ENCODE measurements at regions of chr1 and their contacts with region 1.

Region 1: GRCh38 chr1:85276215-85276977 is at the start of gene BCL10:
- DNase-seq: peak; percentile 98
- H3K4me3 Mint-ChIP-seq: peak within 1 kb of the TSS; percentile 83
- H3K27ac Mint-ChIP-seq: peak within 1 kb of the TSS; percentile 87
- H3K4me1 Mint-ChIP-seq: peaks cover 47% of the 10 kb centered on the region
- H3K27me3 Mint-ChIP-seq: peaks cover 12% of the 10 kb centered on the region
- total RNA-seq, gene BCL10: 24.4 and 27.4 TPM in 2 replicates

Region 2: GRCh38 chr1:84690397-84691121 is 585.8 kb before region 1 on chr1 and contains the start of gene SSX2IP:
- intact Hi-C with region 1: loop called (anchors 10 kb)
- DNase-seq: peak; percentile 98
- H3K4me3 Mint-ChIP-seq: peak within 1 kb of the TSS; percentile 94
- H3K27ac Mint-ChIP-seq: peak within 1 kb of the TSS; percentile 94
- H3K4me1 Mint-ChIP-seq: peaks cover 46% of the 10 kb centered on the region
- H3K27me3 Mint-ChIP-seq: no peaks in the 10 kb centered on the region
- total RNA-seq, gene SSX2IP: 12.1 and 13.0 TPM in 2 replicates

Region 3: DNA sequence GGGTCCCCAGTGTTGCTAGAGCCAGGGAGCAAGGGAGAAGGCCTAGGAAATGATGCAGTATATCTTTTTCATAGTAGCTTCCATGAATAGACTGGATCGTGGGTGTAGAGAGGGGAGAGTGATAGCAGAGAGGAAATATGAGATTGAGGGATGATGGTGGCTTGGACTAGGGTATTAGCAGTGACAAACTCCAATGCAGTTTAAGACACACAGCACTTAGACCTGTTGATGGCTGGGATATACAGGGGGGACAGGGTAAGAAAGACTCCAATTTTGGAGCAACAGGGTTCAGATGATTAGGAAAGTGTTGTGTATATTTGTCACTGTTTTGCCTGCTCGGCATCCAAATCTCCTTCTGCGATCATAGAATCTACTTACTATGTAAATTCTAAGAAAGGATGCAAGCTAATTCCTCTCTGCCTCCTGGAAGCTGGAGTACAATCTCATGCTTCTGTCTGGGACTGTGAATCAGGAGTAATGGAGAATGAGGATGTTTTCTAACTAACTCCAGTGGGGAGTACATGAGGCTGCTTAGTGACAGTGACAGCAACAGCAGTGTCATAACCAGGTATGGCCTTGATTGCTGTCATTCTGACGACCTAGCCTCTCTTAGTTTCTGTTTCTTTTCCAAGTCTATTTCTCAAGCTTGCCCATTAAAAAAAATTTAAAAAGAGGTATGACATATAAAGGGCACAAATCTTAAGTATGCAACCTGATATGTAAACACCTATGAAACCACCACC is 123.1 kb before region 1 on chr1:
- intact Hi-C with region 1: no loop called
- DNase-seq: no peak
- H3K4me3 Mint-ChIP-seq: no peak overlapping the region
- H3K27ac Mint-ChIP-seq: no peak overlapping the region
- H3K4me1 Mint-ChIP-seq: peaks cover 25% of the 10 kb centered on the region
- H3K27me3 Mint-ChIP-seq: no peaks in the 10 kb centered on the region

Region 4: DNA sequence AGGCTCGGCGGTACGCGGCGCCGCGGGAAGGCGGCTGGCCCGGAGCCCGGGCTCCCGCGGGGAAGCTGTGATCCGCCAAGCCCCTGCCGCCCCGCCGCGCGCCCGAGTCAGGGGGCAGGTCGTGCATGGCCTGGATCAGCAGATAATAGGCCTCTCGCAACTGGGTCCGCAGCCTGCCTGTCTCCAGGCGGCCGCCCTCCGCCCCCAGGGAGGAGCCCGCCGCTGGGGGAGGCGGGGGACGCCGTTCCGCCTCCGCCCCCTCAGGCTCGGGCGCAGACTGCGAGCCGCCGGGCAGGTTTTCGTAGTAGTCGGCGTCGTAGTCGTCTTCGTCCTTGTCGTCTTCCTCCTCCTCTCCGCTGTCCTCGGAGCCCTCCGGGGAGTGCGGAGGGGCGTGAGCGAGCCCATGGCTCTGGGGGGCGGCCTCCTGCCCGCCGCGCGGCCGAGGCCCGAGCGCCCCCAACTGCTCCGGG is 75.5 kb before region 1 on chr1 and contains the start of gene SYDE2:
- intact Hi-C with region 1: loop called (anchors 2 kb)
- DNase-seq: peak; percentile 78
- H3K4me3 Mint-ChIP-seq: peak within 1 kb of the TSS; percentile 90
- H3K27ac Mint-ChIP-seq: peak within 1 kb of the TSS; percentile 88
- H3K4me1 Mint-ChIP-seq: peaks cover 19% of the 10 kb centered on the region
- H3K27me3 Mint-ChIP-seq: peaks cover 20% of the 10 kb centered on the region
- total RNA-seq, gene SYDE2: 1.9 and 2.1 TPM in 2 replicates

Region 5: GRCh38 chr1:85297855-85298629 is 21.6 kb after region 1 on chr1:
- intact Hi-C with region 1: loop called (anchors 1 kb)
- DNase-seq: peak; percentile 28
- H3K4me3 Mint-ChIP-seq: peak overlapping the region; percentile 49
- H3K27ac Mint-ChIP-seq: peak overlapping the region; percentile 81
- H3K4me1 Mint-ChIP-seq: peaks cover 24% of the 10 kb centered on the region
- H3K27me3 Mint-ChIP-seq: peaks cover 64% of the 10 kb centered on the region

Region 6: GRCh38 chr1:86395771-86396497 is 1119.5 kb after region 1 on chr1 and contains the start of gene ODF2L:
- intact Hi-C with region 1: loop called (anchors 5 kb)
- DNase-seq: peak; percentile 88
- H3K4me3 Mint-ChIP-seq: peak within 1 kb of the TSS; percentile 89
- H3K27ac Mint-ChIP-seq: peak within 1 kb of the TSS; percentile 85
- H3K4me1 Mint-ChIP-seq: peaks cover 33% of the 10 kb centered on the region
- H3K27me3 Mint-ChIP-seq: peaks cover 10% of the 10 kb centered on the region
- total RNA-seq, gene ODF2L: 21.8 and 22.5 TPM in 2 replicates

Measured in activated T-helper 2 cell treated with anti-CD3 and anti-CD28 coated beads, Interferon-gamma antibody, Interleukin-2, Interleukin-4, amounts not matched to agents 10 μg/mL and 5 μg/mL and 100 μg/mL, durations not matched to agents 14 hours and 24 hours and 36 hours (primary cell).